Activated CD8-positive, alpha-beta memory T cell treated with anti-CD3 and anti-CD28 coated beads, Interleukin-2, amount 10 ng/mL, durations not matched to agents 7 days and 5 days (primary cell): ENCODE measurements at regions of chr6 and their contacts with region 1.

Region 1: DNA sequence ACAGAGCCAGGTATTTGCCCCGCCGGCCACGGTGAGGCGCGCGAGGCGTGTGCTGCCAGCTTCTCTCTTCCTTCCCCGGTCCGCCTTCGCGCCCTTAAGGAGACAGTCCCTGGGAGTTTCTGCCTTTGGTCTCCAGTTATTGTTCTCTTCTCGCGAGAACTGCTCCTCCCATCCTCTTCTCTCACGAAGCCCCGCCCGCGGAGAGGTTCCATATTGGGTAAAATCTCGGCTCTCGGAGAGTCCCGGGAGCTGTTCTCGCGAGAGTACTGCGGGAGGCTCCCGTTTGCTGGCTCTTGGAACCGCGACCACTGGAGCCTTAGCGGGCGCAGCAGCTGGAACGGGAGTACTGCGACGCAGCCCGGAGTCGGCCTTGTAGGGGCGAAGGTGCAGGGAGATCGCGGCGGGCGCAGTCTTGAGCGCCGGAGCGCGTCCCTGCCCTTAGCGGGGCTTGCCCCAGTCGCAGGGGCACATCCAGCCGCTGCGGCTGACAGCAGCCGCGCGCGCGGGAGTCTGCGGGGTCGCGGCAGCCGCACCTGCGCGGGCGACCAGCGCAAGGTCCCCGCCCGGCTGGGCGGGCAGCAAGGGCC is at the start of gene MAPK14:
- DNase-seq: peak; percentile 99
- ATAC-seq: peak; percentile 92
- H3K4me3 Mint-ChIP-seq: peak within 1 kb of the TSS; percentile 93
- H3K27ac Mint-ChIP-seq: peak within 1 kb of the TSS; percentile 93
- H3K4me1 Mint-ChIP-seq: peaks cover 39% of the 10 kb centered on the region
- H3K27me3 Mint-ChIP-seq: peaks cover 25% of the 10 kb centered on the region
- total RNA-seq, gene MAPK14: 52.8 to 65.7 TPM

Region 2: GRCh38 chr6:36042618-36043260 is 15.1 kb after region 1 on chr6:
- CTCF ChIA-PET with region 1: interaction called, 33 read pairs
- DNase-seq: no peak
- ATAC-seq: no peak
- H3K4me3 Mint-ChIP-seq: no peak overlapping the region
- H3K27ac Mint-ChIP-seq: no peak overlapping the region
- H3K4me1 Mint-ChIP-seq: peaks cover 21% of the 10 kb centered on the region
- H3K27me3 Mint-ChIP-seq: no peaks in the 10 kb centered on the region

Region 3: GRCh38 chr6:36094753-36095496 is 67.3 kb after region 1 on chr6:
- CTCF ChIA-PET with region 1: interaction called, 114 read pairs
- DNase-seq: peak; percentile 86
- ATAC-seq: peak; percentile 94
- H3K4me3 Mint-ChIP-seq: no peak overlapping the region
- H3K27ac Mint-ChIP-seq: peak overlapping the region; percentile 45
- H3K4me1 Mint-ChIP-seq: peaks cover 21% of the 10 kb centered on the region
- H3K27me3 Mint-ChIP-seq: no peaks in the 10 kb centered on the region

Region 4: GRCh38 chr6:36120979-36121786 is 93.6 kb after region 1 on chr6:
- CTCF ChIA-PET with region 1: interaction called, 31 read pairs
- DNase-seq: peak; percentile 87
- ATAC-seq: peak; percentile 52
- H3K4me3 Mint-ChIP-seq: peak overlapping the region; percentile 69
- H3K27ac Mint-ChIP-seq: peak overlapping the region; percentile 99
- H3K4me1 Mint-ChIP-seq: peaks cover 86% of the 10 kb centered on the region
- H3K27me3 Mint-ChIP-seq: no peaks in the 10 kb centered on the region

Region 5: DNA sequence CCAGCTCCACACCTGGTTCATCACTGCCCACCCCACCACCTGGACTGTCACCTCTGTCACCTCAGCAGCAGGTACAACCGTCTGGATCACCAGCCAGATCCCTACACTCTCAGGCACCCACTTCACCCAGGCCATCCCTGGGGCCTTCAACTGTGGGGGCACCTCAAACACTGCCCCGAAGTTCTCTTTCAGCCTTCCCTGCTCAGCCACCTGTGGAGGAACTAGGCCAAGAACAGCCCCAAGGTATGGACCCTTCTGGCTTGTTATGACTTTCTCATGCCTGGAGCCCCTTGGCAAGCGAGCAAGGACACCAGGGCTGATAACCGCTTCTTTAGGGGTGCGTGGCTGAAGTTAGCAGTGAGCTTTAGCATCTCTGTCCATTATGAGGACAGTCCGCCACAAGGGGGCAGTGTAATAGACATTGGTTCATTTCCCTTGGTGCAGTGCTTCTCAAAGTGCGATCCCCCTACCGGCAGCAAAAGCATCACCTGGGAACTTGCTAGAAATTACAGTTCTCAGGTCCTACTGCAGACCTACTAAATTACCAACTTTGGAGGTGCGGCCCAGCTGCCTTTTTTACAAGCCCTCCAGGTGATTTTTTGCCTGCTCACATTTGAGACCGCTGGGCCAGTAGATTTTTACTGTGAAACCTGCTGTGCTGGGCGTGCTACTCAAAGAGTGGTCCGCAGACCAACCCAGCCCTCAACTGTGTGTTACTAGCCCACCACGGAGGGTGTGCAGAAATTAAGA is 274.8 kb after region 1 on chr6:
- CTCF ChIA-PET with region 1: interaction called, 10 read pairs
- DNase-seq: peak; percentile 95
- ATAC-seq: peak; percentile 98
- H3K4me3 Mint-ChIP-seq: no peak overlapping the region
- H3K27ac Mint-ChIP-seq: no peak overlapping the region
- H3K4me1 Mint-ChIP-seq: no peaks in the 10 kb centered on the region
- H3K27me3 Mint-ChIP-seq: peaks cover 30% of the 10 kb centered on the region

Region 6: GRCh38 chr6:36360241-36361054 is 332.9 kb after region 1 on chr6:
- CTCF ChIA-PET with region 1: interaction called, 32 read pairs
- DNase-seq: peak; percentile 82
- ATAC-seq: peak; percentile 87
- H3K4me3 Mint-ChIP-seq: no peak overlapping the region
- H3K27ac Mint-ChIP-seq: no peak overlapping the region
- H3K4me1 Mint-ChIP-seq: peaks cover 37% of the 10 kb centered on the region
- H3K27me3 Mint-ChIP-seq: peaks cover 12% of the 10 kb centered on the region